Natural killer cell (primary cell): ENCODE measurements at regions of chr3 and their contacts with region 1.

Region 1: DNA sequence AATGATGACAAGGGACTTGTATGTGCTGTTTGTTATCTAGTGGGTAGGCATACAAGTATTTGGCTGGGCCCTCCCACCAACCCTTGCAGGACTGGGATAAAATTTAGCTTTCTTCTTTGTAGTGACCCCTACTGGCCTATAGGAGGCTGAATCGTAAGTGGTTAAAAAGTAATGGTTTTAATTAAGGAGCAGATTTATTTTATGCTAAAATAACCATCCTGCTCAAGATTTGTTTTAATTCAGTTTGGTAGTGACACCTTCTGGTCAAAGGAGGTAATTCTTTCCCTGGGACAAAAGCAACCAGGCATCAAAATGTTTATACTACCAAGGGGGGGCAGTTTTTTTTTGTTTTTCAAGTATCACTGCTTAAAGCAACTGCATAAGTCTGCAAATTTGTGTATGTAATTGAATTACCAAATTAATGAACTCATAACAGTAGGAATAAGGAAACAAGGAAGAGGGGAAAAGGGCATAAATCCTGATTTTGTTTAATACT is 70.7 kb downstream of the TOP2B start:
- DNase-seq: peak in 1 of 2 donors; percentile 61
- ATAC-seq: peak; percentile 66 to 86 (median 76)
- H3K4me3 ChIP-seq: no peak overlapping the region
- H3K4me3 Mint-ChIP-seq: no peak overlapping the region
- H3K27ac ChIP-seq: no peak overlapping the region
- H3K27ac Mint-ChIP-seq: peak overlapping the region in 1 of 2 donors; percentile 34
- H3K4me1 ChIP-seq: no peaks in the 10 kb centered on the region
- H3K4me1 Mint-ChIP-seq: peaks cover 1 to 7% of the 10 kb centered on the region in 2 donors
- H3K27me3 ChIP-seq: no peaks in the 10 kb centered on the region
- H3K27me3 Mint-ChIP-seq: no peaks in the 10 kb centered on the region
- CTCF ChIP-seq: peak; percentile 81

Region 2: DNA sequence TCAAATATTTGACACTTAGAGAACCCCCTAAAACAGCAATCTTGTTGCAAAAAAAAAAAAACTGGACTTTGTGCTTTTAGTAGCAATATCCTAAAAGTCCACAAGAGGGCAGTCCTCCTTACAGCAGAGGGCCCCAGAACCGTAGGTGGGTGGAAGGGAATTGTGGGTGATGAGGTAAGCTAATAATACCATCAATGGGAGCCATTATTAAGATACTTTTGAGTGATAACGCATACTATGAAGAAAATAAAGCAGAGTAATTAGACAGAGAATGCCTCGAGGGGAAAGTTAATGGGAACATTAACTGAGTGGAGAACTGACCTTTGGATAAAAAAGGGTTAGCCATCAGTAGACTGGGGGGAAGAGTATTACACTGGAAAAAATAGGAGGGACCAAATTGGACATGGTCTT is 1329.3 kb before region 1 on chr3:
- intact Hi-C with region 1: loop called (anchors 5 kb)
- DNase-seq: peak in 1 of 2 donors; percentile 24
- ATAC-seq: peak in 1 of 3 donors; percentile 53
- H3K4me3 ChIP-seq: no peak overlapping the region
- H3K4me3 Mint-ChIP-seq: no peak overlapping the region
- H3K27ac ChIP-seq: no peak overlapping the region
- H3K27ac Mint-ChIP-seq: no peak overlapping the region
- H3K4me1 ChIP-seq: peaks cover 2% of the 10 kb centered on the region
- H3K4me1 Mint-ChIP-seq: no peaks in the 10 kb centered on the region
- H3K27me3 ChIP-seq: no peaks in the 10 kb centered on the region
- H3K27me3 Mint-ChIP-seq: peaks cover 3 to 12% of the 10 kb centered on the region in 2 donors
- CTCF ChIP-seq: peak; percentile 63

Region 3: GRCh38 chr3:24680214-24680967 is 913.7 kb before region 1 on chr3:
- intact Hi-C with region 1: loop called (anchors 1 kb)
- DNase-seq: peak; percentile 32 to 60
- ATAC-seq: peak; percentile 74 to 80 (median 80)
- H3K4me3 ChIP-seq: no peak overlapping the region
- H3K4me3 Mint-ChIP-seq: peak overlapping the region; percentile 75
- H3K27ac ChIP-seq: no peak overlapping the region
- H3K27ac Mint-ChIP-seq: no peak overlapping the region
- H3K4me1 ChIP-seq: peaks cover 4% of the 10 kb centered on the region
- H3K4me1 Mint-ChIP-seq: peaks cover 37 to 38% of the 10 kb centered on the region in 2 donors
- H3K27me3 ChIP-seq: peaks cover 2% of the 10 kb centered on the region
- H3K27me3 Mint-ChIP-seq: peaks cover 35 to 77% of the 10 kb centered on the region in 2 donors
- CTCF ChIP-seq: peak; percentile 87

Region 4: DNA sequence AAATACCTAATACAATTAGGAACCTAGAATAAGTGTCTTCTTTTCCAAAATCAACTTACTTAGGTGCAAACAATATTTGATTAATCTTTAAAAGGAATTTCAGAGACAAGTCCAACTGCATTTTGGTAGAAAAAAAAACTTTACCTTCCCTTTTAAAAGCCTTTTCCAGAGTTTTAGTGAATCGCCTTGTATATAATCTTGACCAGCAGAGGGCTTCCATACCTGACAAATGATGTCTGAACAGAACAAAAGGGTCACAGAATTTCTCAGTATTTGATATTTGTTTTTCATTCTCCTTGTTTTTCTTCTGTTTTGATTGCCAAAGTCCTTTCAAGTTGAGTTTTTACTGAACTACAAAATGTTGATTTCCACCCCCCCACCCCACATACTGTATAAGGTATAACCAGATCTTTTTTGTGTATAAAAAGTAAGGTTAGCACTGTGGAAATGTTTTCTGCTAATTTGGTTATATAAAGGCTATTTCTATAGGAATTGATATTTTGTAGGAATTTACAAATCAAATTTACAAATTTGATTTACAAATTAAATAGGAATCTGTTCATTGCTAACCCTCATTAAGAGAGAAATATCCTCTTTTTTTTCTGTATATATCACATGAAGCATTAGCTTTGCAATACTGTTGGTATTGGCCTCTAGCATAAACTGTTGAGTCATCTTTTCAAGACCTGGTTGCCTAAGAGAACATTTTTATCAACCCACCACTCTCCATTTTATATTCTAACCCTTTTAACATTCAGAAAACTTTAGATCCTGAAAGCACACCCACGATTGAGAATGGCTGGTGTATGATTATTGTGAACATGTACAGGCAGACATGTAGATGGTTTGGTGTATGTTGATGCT is 630.1 kb before region 1 on chr3:
- intact Hi-C with region 1: loop called (anchors 10 kb)
- DNase-seq: no peak
- ATAC-seq: no peak
- H3K4me3 ChIP-seq: no peak overlapping the region
- H3K4me3 Mint-ChIP-seq: no peak overlapping the region
- H3K27ac ChIP-seq: no peak overlapping the region
- H3K27ac Mint-ChIP-seq: no peak overlapping the region
- H3K4me1 ChIP-seq: no peaks in the 10 kb centered on the region
- H3K4me1 Mint-ChIP-seq: no peaks in the 10 kb centered on the region
- H3K27me3 ChIP-seq: no peaks in the 10 kb centered on the region
- H3K27me3 Mint-ChIP-seq: no peaks in the 10 kb centered on the region
- CTCF ChIP-seq: no peak

Region 5: DNA sequence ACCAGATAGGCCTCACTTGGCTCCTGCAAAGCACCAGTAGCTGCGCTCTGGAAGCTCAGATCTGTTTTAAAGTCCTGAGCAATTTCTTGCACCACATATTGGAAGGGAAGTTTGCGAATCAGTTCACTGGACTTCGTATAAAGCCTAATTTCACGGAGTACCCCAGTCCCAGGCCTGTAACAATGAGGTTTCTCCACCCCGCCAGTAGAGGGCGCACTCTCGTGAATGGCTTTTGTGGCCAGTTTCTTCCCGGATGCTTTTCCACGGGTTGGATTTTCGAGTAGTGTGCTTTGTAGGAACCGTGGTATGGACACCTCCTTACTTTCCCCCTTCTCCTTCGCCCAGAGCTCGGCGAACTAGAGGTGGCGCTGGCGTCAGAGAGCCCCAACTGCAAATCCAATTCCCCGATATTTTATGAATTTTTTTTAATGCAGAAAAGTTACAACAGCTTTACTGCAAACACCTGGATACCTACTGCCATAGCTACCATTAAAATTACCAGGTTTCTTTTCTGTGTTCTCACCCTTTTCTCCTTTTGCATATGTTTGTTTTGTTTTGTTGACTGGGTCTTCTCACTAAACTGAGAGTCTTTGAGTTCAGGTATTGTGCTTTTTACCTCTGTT is 152.7 kb before region 1 on chr3:
- intact Hi-C with region 1: loop called (anchors 2 kb)
- DNase-seq: peak; percentile 29 to 35
- ATAC-seq: peak in 1 of 3 donors; percentile 39
- H3K4me3 ChIP-seq: no peak overlapping the region
- H3K4me3 Mint-ChIP-seq: no peak overlapping the region
- H3K27ac ChIP-seq: no peak overlapping the region
- H3K27ac Mint-ChIP-seq: no peak overlapping the region
- H3K4me1 ChIP-seq: no peaks in the 10 kb centered on the region
- H3K4me1 Mint-ChIP-seq: no peaks in the 10 kb centered on the region
- H3K27me3 ChIP-seq: no peaks in the 10 kb centered on the region
- H3K27me3 Mint-ChIP-seq: peaks cover 0 to 9% of the 10 kb centered on the region in 2 donors
- CTCF ChIP-seq: peak; percentile 91

Region 6: GRCh38 chr3:25573386-25574171 is 20.5 kb before region 1 on chr3:
- intact Hi-C with region 1: no loop called
- DNase-seq: no peak
- ATAC-seq: no peak
- H3K4me3 ChIP-seq: no peak overlapping the region
- H3K4me3 Mint-ChIP-seq: no peak overlapping the region
- H3K27ac ChIP-seq: no peak overlapping the region
- H3K27ac Mint-ChIP-seq: no peak overlapping the region
- H3K4me1 ChIP-seq: no peaks in the 10 kb centered on the region
- H3K4me1 Mint-ChIP-seq: no peaks in the 10 kb centered on the region
- H3K27me3 ChIP-seq: no peaks in the 10 kb centered on the region
- H3K27me3 Mint-ChIP-seq: no peaks in the 10 kb centered on the region
- CTCF ChIP-seq: no peak